Calu3 (cell line): ENCODE measurements at regions of chr4 and their contacts with region 1.

Region 1: GRCh38 chr4:127708985-127709384 is 21.2 kb upstream of the SLC25A31 start:
- DNase-seq: peak; percentile 55
- H3K4me3 Mint-ChIP-seq: no peak overlapping the region
- H3K27ac Mint-ChIP-seq: no peak overlapping the region
- H3K4me1 Mint-ChIP-seq: no peaks in the 10 kb centered on the region
- H3K27me3 Mint-ChIP-seq: no peaks in the 10 kb centered on the region
- CTCF ChIP-seq: no peak

Region 2: GRCh38 chr4:127632420-127633403 is 76.3 kb before region 1 on chr4 and contains the start of gene INTU:
- CTCF ChIA-PET with region 1: no interaction called
- intact Hi-C with region 1: loop called (anchors 5 kb)
- DNase-seq: peak; percentile 86
- H3K4me3 Mint-ChIP-seq: peak within 1 kb of the TSS; percentile 89
- H3K27ac Mint-ChIP-seq: peak within 1 kb of the TSS; percentile 91
- H3K4me1 Mint-ChIP-seq: peaks cover 7% of the 10 kb centered on the region
- H3K27me3 Mint-ChIP-seq: no peaks in the 10 kb centered on the region
- CTCF ChIP-seq: no peak
- total RNA-seq, gene INTU: 4.6 and 4.8 TPM in 2 replicates